ENCODE measurements at regions of chr6 and their contacts with region 1.

Region 1: DNA sequence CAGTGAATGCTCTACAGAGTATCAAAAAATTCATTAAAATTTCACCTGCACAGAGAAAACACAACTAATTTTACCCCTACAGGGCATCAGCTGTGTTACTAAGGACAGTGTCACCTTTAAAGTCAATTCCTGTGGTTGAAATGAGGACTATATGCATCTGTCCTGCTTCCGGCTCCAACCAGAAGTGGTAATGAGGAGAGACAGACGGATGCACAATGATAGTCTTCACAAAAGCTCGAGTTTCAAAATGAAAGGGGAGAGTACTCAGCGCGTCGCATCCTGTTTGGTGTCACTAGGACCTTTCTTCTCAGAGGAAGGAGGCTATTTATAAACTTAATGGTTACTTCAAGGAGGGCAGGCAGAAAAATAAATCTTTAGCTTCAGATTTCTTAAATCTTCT is 86.5 kb downstream of the LYRM4 start:
- DNase-seq: no peak
- H3K4me3 ChIP-seq: no peak overlapping the region
- H3K27ac ChIP-seq: no peak overlapping the region
- H3K4me1 ChIP-seq: peaks cover 0 to 4% (median 0%) of the 10 kb centered on the region in 4 experiments; a peak in 2 of 7 replicates
- H3K27me3 ChIP-seq: no peaks in the 10 kb centered on the region; a peak in 1 of 7 replicates
- CTCF ChIP-seq: no peak
- EP300 ChIP-seq: no peak
- POLR2A ChIP-seq: no peak
- RAD21 ChIP-seq: no peak

Region 2: GRCh38 chr6:4316867-4317400 is 857.3 kb before region 1 on chr6:
- CTCF ChIA-PET with region 1: no interaction called
- POLR2A ChIA-PET with region 1: no interaction called
- DNase-seq: no peak
- H3K4me3 ChIP-seq: no peak overlapping the region
- H3K27ac ChIP-seq: no peak overlapping the region
- H3K4me1 ChIP-seq: peaks cover 0 to 5% (median 3%) of the 10 kb centered on the region in 4 experiments; a peak in 3 of 7 replicates
- H3K27me3 ChIP-seq: peaks cover 0 to 3% (median 0%) of the 10 kb centered on the region in 4 experiments; a peak in 1 of 7 replicates
- CTCF ChIP-seq: no peak
- EP300 ChIP-seq: no peak
- POLR2A ChIP-seq: no peak
- RAD21 ChIP-seq: no peak

Region 3: DNA sequence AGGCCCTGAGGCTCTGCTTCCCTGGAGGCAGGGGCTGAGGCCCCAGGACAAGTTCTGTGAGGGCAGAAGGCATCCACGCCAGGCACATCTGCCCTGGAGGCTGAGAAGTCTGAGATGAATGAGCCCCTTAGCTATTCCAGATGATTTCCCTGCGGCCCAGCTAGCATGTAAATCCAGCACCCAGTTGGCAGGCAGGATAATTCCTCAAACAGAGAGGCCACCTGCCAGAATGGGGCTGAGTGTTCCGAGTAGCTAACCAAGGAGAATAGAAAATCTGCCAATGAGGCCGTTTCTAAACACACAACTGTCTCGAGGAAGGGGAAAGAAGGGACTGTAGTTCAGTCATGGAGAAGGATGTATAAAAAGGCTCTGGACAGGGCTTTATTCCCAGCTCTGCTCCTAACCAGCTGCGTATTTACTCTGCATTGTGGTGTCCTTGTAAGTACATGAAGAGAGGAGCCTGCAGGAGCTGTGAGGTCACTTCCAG is 609.4 kb before region 1 on chr6:
- CTCF ChIA-PET with region 1: no interaction called
- POLR2A ChIA-PET with region 1: no interaction called
- DNase-seq: peak in 1 of 2 experiments; percentile 37
- H3K4me3 ChIP-seq: no peak overlapping the region
- H3K27ac ChIP-seq: no peak overlapping the region
- H3K4me1 ChIP-seq: no peaks in the 10 kb centered on the region
- H3K27me3 ChIP-seq: no peaks in the 10 kb centered on the region
- CTCF ChIP-seq: no peak
- EP300 ChIP-seq: no peak
- POLR2A ChIP-seq: no peak
- RAD21 ChIP-seq: no peak

Region 4: DNA sequence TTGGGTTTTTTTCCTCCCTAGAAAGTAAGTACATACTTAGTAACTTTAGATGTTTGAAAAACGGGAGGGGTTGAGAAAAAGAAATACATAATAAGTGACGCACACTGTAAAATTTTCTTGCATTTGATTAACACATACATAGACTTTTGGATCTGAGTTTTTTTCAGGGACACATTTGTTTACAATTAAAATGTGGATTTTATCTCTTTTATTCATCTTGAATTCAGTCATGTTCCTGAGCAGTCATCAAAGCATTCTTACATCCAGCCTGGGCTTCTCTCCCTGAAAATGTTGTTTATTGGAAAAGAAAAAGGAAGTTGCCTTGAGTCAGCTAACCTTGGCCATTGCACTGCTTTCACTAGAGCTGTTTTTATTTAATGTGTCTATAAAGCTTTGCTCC is 161.7 kb before region 1 on chr6:
- CTCF ChIA-PET with region 1: no interaction called
- POLR2A ChIA-PET with region 1: no interaction called
- DNase-seq: no peak
- H3K4me3 ChIP-seq: no peak overlapping the region
- H3K27ac ChIP-seq: no peak overlapping the region
- H3K4me1 ChIP-seq: peaks cover 0 to 2% (median 0%) of the 10 kb centered on the region in 4 experiments; a peak in 1 of 7 replicates
- H3K27me3 ChIP-seq: no peaks in the 10 kb centered on the region; a peak in 1 of 7 replicates
- CTCF ChIP-seq: no peak
- EP300 ChIP-seq: no peak
- POLR2A ChIP-seq: no peak
- RAD21 ChIP-seq: no peak

Region 5: DNA sequence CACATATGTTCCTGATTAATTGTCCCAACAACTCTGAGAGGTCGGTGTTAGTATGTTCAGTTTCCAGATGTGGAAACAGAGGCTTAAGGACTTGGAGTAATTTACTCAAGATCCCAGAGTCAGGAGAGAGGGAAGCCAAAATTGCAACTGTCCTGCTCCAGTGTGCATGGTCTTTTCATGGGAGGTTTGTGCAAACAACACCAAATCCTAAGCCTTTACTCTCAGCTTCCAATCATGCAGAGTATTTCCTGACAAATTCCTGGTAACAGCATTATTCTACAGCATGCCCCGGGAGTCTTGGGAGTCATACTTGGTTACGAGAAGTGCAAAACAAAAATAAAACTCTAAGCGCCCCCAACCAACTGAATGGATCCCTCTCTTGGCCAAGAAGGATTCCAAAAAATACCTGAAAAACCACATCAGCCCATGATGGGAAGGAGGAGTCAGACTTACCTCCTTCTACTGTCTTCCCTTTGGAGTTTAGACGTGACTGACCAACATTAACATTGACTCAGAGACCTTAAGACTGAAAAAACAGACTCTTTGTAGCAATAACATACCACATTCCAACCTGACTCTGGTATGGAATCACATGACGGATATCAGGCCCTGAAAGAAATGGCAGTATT is 119.9 kb before region 1 on chr6:
- CTCF ChIA-PET with region 1: interaction called, 16 read pairs
- POLR2A ChIA-PET with region 1: no interaction called
- DNase-seq: no peak
- H3K4me3 ChIP-seq: no peak overlapping the region
- H3K27ac ChIP-seq: no peak overlapping the region
- H3K4me1 ChIP-seq: no peaks in the 10 kb centered on the region
- H3K27me3 ChIP-seq: no peaks in the 10 kb centered on the region
- CTCF ChIP-seq: no peak
- EP300 ChIP-seq: no peak
- POLR2A ChIP-seq: no peak
- RAD21 ChIP-seq: no peak

Region 6: DNA sequence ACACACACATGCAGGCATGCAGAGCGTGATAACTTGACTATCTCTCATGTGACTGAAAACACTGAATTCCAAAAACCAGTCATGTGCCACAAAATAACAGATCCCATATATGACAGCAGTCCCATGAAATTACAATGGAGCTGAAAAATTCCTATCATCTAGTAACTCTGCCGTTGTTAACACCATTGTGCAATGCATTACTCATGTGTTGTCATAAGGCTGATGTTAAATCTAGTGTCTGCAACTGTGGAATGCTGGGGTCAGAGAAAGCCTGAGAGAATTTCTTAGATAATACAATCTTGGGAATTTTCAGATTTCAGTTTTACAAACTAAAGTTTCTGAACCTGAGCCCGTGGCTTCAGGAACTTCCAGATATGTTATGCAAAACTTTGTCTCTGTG is 16.3 kb after region 1 on chr6:
- CTCF ChIA-PET with region 1: interaction called, 20 read pairs
- POLR2A ChIA-PET with region 1: no interaction called
- DNase-seq: no peak
- H3K4me3 ChIP-seq: no peak overlapping the region
- H3K27ac ChIP-seq: no peak overlapping the region
- H3K4me1 ChIP-seq: peaks cover 0 to 5% (median 3%) of the 10 kb centered on the region in 4 experiments; a peak in 4 of 7 replicates
- H3K27me3 ChIP-seq: no peaks in the 10 kb centered on the region
- CTCF ChIP-seq: no peak
- EP300 ChIP-seq: no peak
- POLR2A ChIP-seq: no peak
- RAD21 ChIP-seq: no peak

Region 7: GRCh38 chr6:5556011-5556410 is 381.8 kb after region 1 on chr6:
- CTCF ChIA-PET with region 1: no interaction called
- POLR2A ChIA-PET with region 1: no interaction called
- DNase-seq: no peak
- H3K4me3 ChIP-seq: no peak overlapping the region
- H3K27ac ChIP-seq: no peak overlapping the region
- H3K4me1 ChIP-seq: peaks cover 0 to 4% (median 2%) of the 10 kb centered on the region in 4 experiments; a peak in 2 of 7 replicates
- H3K27me3 ChIP-seq: no peaks in the 10 kb centered on the region
- CTCF ChIP-seq: no peak
- EP300 ChIP-seq: no peak
- POLR2A ChIP-seq: no peak
- RAD21 ChIP-seq: no peak